Pancreas (tissue), 10 donors: ENCODE measurements at regions of chr1 and their contacts with region 1.

Region 1: DNA sequence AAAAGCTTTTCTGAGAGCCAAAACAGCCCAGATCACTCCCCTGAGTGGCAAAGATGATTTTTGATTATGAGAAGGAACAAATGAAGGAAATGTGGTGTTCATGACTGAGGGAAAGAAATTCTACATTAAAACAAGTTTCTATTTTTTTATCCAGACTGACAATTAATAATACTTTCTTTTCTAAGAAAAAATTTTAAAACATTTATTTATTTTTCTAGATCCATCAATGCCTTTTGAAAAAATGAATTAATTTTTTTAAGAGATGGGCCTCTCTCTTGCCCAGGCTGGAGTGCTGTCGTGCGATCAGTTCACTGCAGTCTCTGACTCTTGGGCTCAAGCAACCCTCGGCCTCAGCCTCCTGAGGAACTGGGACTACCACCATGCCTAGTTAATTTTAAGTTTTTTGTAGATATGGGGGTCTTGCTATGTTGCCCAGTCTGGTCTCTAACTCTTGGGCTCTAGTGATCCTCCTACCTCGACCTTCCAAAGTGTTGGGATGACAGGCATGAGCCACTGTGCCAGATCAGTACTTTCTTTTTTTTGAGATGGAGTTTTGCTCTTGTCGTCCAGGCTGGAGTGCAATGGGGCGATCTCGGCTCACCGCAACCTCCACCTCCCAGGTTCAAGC is 11.2 kb upstream of the TXNIP start:
- DNase-seq: no peak
- ATAC-seq: no peak
- H3K4me3 ChIP-seq: no peak overlapping the region
- H3K27ac ChIP-seq: peak overlapping the region in 2 of 4 donors; percentile 47 to 78
- H3K4me1 ChIP-seq: peaks cover 0 to 2% (median 0%) of the 10 kb centered on the region in 3 donors
- H3K27me3 ChIP-seq: no peaks in the 10 kb centered on the region
- CTCF ChIP-seq: peak in 1 of 4 donors; percentile 2

Region 2: DNA sequence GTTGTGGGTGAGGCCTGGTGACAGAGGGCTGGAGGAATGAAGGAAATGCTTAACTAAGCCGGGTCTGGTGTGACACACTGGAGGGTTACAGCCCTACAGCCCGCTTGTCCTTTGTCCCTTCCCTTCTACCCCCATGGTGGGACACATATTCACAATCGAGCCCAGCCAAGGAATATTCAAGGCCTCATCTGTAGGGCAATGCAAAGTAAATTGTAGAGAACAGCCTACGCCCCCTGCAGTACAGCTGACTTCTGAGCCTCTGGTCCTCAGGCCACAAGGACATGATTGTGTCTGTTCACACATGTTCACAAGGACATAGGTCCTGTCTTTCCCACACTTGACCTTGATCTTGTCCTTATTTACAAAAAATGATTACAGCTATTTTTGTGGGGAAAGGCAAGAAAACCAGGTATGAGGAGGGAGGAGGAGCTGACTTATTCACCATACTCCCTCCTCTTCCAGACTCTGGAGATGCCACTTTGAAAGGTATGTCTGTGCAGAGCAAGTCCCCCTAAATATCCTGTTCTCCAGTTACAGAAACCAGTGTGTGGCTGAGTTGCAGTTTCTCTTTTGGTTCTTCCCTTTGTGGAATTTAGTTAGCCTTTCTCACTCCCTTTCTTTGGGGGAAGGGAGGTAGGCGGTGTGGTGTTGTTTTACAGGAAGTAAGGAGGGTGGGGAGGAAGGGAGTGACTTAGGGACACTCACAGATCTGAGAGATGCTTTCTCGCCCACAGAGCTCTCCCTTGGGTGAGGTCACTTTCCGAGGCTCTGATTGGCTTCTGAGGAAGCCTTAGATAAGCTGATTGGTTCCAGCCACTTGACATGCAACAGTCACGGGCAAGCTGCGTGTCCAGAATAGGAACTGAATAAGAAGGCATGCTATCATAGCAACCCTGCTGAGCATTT is 28.5 kb before region 1 on chr1:
- intact Hi-C with region 1: loop called in 2 of 3 experiments (anchors 2 to 5 kb)
- DNase-seq: peak in 4 of 6 donors; percentile 77 to 87 (median 82)
- ATAC-seq: peak; percentile 73 to 87 (median 82)
- H3K4me3 ChIP-seq: peak overlapping the region in 2 of 4 donors; percentile 12 to 17
- H3K27ac ChIP-seq: peak overlapping the region; percentile 69 to 92 (median 82)
- H3K4me1 ChIP-seq: peaks cover 42 to 59% (median 50%) of the 10 kb centered on the region in 3 donors
- H3K27me3 ChIP-seq: no peaks in the 10 kb centered on the region
- CTCF ChIP-seq: no peak